Panc1 (cell line): ENCODE measurements at regions of chr3 and their contacts with region 1.

Region 1: DNA sequence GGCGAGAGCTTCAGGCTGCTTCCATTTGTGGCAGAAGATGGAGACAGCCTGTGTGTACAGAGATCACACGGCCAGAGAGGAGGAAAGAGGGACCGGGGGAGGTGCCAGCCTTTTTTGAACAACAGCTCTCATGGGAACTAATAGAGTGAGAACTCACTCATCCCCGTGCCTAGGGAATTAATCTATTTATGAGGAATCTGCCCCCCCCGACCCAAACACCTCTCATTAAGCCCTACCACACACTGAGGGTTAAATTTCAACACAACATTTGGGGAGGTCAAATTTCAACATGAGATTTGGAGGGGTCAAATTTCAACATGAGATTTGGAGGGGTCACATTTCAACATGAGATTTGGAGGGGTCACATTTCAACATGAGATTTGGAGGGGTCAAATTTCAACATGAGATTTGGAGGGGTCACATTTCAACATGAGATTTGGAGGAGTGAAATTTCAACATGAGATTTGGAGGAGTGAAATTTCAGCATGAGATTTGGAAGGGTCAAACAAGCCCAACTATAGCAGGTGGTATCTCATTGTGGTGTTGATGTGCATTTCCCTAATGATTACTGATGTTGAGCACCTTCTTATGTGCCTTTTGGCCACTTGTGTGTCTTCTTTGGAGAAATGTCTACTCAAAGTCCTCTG is 20.6 kb upstream of the RFTN1 start:
- DNase-seq: no peak
- ATAC-seq: no peak
- H3K4me3 ChIP-seq: no peak overlapping the region
- H3K27ac ChIP-seq: no peak overlapping the region
- H3K4me1 ChIP-seq: no peaks in the 10 kb centered on the region
- H3K27me3 ChIP-seq: peaks cover 7% of the 10 kb centered on the region
- CTCF ChIP-seq: no peak

Region 2: DNA sequence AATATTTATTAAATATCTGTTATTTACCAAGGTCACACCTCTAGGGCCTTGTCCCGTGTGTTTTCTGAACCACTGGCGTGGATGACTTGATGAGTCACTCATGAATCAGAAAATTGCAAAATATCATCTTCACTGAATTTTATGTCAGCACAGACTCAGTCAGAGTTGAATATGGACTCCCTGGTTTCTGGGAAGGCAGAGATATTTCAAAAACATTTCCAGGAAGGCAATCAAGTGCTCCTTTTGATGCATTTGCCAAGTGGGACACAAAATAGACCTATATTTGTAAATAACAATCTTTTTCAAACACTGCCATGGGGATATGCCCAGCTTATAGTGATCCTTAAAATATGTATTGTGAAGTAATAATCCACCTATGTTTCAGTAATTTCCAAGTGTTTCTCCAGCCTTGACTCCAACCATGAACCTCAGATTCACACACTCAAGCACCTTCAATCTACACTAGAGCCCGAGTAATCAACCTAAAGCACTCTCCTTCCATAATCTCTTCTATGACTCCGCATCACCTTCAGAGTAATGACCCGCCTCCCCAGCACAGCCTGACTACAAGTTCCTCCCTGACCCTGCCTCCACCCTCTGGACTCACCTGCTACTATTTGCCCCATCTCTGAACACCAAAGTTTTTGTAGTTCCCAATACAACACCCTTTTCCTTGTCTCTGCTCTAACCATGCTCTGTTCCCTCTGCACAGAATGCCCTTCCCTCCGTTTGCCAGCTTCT is 293.6 kb before region 1 on chr3:
- CTCF ChIA-PET with region 1: no interaction called
- POLR2A ChIA-PET with region 1: no interaction called
- in situ Hi-C with region 1: no loop called
- intact Hi-C with region 1: no loop called
- DNase-seq: peak; percentile 24
- ATAC-seq: no peak
- H3K4me3 ChIP-seq: no peak overlapping the region
- H3K27ac ChIP-seq: no peak overlapping the region
- H3K4me1 ChIP-seq: no peaks in the 10 kb centered on the region
- H3K27me3 ChIP-seq: no peaks in the 10 kb centered on the region
- CTCF ChIP-seq: no peak

Region 3: GRCh38 chr3:16279010-16279801 is 254.8 kb before region 1 on chr3:
- CTCF ChIA-PET with region 1: no interaction called
- POLR2A ChIA-PET with region 1: interaction called, 10 read pairs
- in situ Hi-C with region 1: no loop called
- intact Hi-C with region 1: no loop called
- DNase-seq: no peak
- ATAC-seq: no peak
- H3K4me3 ChIP-seq: no peak overlapping the region
- H3K27ac ChIP-seq: no peak overlapping the region
- H3K4me1 ChIP-seq: no peaks in the 10 kb centered on the region
- H3K27me3 ChIP-seq: no peaks in the 10 kb centered on the region
- CTCF ChIP-seq: no peak

Region 4: DNA sequence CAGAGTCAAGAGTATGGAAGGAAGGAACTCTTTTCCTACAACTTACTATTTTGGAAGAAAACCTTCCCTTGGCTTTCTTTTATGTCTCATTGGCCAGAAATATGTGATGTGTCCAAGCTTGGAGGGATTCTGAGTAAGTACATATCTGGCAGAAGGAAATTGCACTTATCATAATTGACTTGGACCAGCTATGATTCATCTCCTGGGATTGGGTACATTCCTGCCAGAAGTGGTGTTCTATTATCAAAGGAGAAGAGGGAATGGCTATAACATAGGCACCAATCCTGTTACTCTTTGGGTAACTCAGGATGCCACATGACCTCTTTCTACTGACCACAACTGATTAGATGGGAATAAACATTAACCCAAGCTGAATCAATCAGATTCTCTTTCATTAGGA is 84.7 kb after region 1 on chr3:
- CTCF ChIA-PET with region 1: no interaction called
- POLR2A ChIA-PET with region 1: no interaction called
- in situ Hi-C with region 1: no loop called
- intact Hi-C with region 1: no loop called
- DNase-seq: no peak
- ATAC-seq: no peak
- H3K4me3 ChIP-seq: no peak overlapping the region
- H3K27ac ChIP-seq: no peak overlapping the region
- H3K4me1 ChIP-seq: no peaks in the 10 kb centered on the region
- H3K27me3 ChIP-seq: no peaks in the 10 kb centered on the region
- CTCF ChIP-seq: no peak